IMR-90 (cell line): ENCODE measurements at regions of chr13 and their contacts with region 1.

Region 1: DNA sequence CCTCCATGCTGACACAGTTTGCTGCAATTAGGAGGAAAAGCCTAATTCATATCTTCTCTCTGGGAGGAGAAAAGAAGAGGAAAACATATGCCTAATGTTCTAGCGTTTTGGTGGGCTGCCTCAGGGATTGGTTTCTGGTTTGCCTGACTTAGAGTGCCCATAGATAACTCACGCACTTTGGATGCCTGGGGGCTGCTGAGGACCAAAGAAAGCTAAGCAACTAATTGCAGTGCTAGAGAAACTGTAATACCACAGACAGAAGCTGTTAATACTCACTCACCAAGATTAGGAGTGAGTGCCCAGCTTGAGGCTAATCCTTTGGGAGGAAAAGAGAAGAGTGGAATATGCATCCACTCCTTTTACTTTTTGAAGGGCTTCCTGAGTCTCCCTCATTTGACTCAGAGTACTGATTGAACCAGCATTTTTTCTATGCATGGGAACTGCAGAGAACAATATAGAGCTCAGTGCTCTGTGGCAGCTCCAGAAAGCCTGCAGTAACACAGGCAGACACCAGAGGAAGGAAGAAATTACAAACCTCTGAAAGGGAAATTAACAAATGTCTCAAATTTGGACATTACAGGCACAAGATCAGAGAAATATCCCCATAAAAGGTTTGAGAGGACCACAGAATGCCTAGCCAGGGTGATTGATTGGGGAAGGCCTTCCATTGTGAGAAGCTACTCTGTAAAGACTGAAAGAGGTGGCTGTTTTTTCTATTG is 666.4 kb downstream of the OLFM4 start:
- DNase-seq: no peak
- ATAC-seq: no peak
- H3K4me3 ChIP-seq: no peak overlapping the region
- H3K27ac ChIP-seq: no peak overlapping the region
- H3K4me1 ChIP-seq: no peaks in the 10 kb centered on the region
- H3K27me3 ChIP-seq: no peaks in the 10 kb centered on the region
- CTCF ChIP-seq: no peak
- POLR2A ChIP-seq: no peak
- RAD21 ChIP-seq: no peak

Region 2: GRCh38 chr13:53622456-53622855 is 72.5 kb before region 1 on chr13:
- CTCF ChIA-PET with region 1: interaction called, 10 read pairs
- POLR2A ChIA-PET with region 1: no interaction called
- dilution Hi-C with region 1: no loop called
- in situ Hi-C with region 1: no loop called
- intact Hi-C with region 1: no loop called
- DNase-seq: no peak
- ATAC-seq: no peak
- H3K4me3 ChIP-seq: no peak overlapping the region
- H3K27ac ChIP-seq: no peak overlapping the region
- H3K4me1 ChIP-seq: no peaks in the 10 kb centered on the region
- H3K27me3 ChIP-seq: no peaks in the 10 kb centered on the region
- CTCF ChIP-seq: no peak
- POLR2A ChIP-seq: no peak
- RAD21 ChIP-seq: no peak